PC-3 (cell line): ENCODE measurements at regions of chr3 and their contacts with region 1.

Region 1: GRCh38 chr3:95511828-95512227 is 1302.6 kb upstream of the EPHA6 start:
- DNase-seq: no peak
- ATAC-seq: no peak
- H3K4me3 ChIP-seq: no peak overlapping the region
- H3K27ac ChIP-seq: no peak overlapping the region
- H3K4me1 ChIP-seq: no peaks in the 10 kb centered on the region
- H3K27me3 ChIP-seq: no peaks in the 10 kb centered on the region
- CTCF ChIP-seq: 0 out of 2 replicates have a peak, but pooled peaks have one; percentile 11

Region 2: DNA sequence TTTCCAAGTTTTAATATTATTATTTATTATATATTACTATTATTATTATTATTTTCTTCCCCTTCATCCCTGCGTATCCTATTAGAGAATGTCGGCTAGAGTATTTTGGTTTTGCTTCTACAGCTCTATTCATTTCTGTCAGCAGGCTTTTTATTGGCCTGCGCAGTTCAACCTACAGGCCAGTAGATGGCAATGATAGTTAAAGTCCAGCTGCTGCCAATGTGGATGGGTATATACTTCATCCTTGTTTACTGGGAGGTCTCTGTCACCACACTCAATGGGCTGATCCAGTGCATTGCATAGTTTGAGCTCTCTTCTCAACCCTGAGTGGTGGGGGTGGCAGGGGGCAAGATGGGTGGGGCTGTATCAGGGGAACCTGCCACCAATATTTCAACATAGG is 649.1 kb before region 1 on chr3:
- CTCF ChIA-PET with region 1: no interaction called
- POLR2A ChIA-PET with region 1: no interaction called
- intact Hi-C with region 1: loop called (anchors 10 kb)
- DNase-seq: peak; percentile 59
- ATAC-seq: peak; percentile 65
- H3K4me3 ChIP-seq: no peak overlapping the region
- H3K27ac ChIP-seq: no peak overlapping the region
- H3K4me1 ChIP-seq: no peaks in the 10 kb centered on the region
- H3K27me3 ChIP-seq: no peaks in the 10 kb centered on the region
- CTCF ChIP-seq: peak; percentile 70

Region 3: DNA sequence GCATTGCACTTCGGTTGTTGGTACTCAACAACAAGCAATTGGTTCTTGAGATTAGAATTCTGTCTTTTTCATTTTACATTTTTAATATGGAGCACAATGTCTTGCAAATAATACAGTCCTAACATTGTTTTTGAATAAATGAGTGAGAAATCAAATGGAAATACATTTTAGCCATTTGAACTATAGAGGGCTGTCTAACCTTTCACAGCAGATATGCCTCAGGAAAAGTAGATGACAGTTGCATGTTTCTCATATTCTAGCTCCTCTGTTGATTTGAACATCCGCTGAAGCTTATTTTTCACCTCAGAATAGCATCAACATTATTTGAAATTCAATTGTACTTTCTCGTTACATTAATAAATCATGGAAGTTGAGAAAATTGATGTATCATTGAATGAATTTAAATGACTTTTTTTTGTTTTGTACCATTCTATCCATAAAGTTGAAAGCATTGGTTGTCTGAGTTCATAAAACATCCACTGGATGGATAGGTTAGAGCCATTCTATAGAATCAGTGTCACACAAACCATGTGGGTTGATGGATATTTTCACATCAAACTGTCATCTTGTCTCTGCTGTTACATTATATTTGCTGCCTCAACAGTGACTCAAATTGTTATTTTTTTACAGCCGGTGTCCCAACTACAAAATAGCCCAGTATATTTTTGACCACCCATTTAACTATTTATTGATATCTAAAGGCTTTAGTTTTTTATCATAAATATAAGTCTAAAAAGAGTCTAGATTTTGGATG is 520.7 kb before region 1 on chr3:
- CTCF ChIA-PET with region 1: no interaction called
- POLR2A ChIA-PET with region 1: no interaction called
- intact Hi-C with region 1: loop called (anchors 5 kb)
- DNase-seq: no peak
- ATAC-seq: no peak
- H3K4me3 ChIP-seq: no peak overlapping the region
- H3K27ac ChIP-seq: no peak overlapping the region
- H3K4me1 ChIP-seq: no peaks in the 10 kb centered on the region
- H3K27me3 ChIP-seq: no peaks in the 10 kb centered on the region
- CTCF ChIP-seq: peak; percentile 40; the same call in 1 of the 2 replicates

Region 4: GRCh38 chr3:95097492-95097891 is 414.3 kb before region 1 on chr3:
- CTCF ChIA-PET with region 1: no interaction called
- POLR2A ChIA-PET with region 1: no interaction called
- intact Hi-C with region 1: no loop called
- DNase-seq: peak; percentile 4
- ATAC-seq: no peak
- H3K4me3 ChIP-seq: no peak overlapping the region
- H3K27ac ChIP-seq: no peak overlapping the region
- H3K4me1 ChIP-seq: no peaks in the 10 kb centered on the region
- H3K27me3 ChIP-seq: no peaks in the 10 kb centered on the region
- CTCF ChIP-seq: no peak

Region 5: DNA sequence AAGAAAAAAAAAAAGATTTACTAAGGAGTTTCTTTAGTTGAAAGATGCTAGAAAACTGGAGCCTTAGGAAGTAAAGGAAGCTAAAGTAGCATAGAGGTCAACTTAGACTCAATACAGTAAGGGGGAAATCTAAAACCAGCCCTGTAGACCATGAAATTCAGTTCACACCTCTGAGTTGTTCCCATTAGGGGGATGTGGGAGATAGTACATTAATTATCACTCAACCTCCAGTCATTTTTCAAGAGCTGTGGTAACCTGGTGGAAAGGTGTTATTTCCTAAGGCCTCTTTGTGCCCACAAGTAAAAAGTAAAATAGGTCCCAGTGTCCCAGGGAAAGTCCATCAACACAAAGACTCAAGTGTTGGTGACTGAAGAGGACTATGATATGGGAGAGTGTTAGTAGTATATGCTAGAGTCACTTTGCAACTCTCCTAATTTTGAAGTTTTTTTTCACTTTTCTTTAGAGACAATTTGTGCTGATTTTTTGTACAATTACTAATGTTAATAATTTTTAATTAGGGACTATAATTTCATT is 28.2 kb after region 1 on chr3:
- CTCF ChIA-PET with region 1: no interaction called
- POLR2A ChIA-PET with region 1: no interaction called
- intact Hi-C with region 1: no loop called
- DNase-seq: no peak
- ATAC-seq: no peak
- H3K4me3 ChIP-seq: no peak overlapping the region
- H3K27ac ChIP-seq: no peak overlapping the region
- H3K4me1 ChIP-seq: no peaks in the 10 kb centered on the region
- H3K27me3 ChIP-seq: no peaks in the 10 kb centered on the region
- CTCF ChIP-seq: no peak